Astrocyte of the cerebellum (primary cell): ENCODE measurements at regions of chr1 and their contacts with region 1.

Region 1: GRCh38 chr1:206634365-206635079 is 814 bp upstream of the DYRK3 start:
- DNase-seq: peak; percentile 75
- H3K4me3 ChIP-seq: peak overlapping the region; percentile 85
- CTCF ChIP-seq: peak; percentile 81

Region 2: GRCh38 chr1:206600527-206600926 is 34.0 kb before region 1 on chr1:
- in situ Hi-C with region 1: no loop called
- DNase-seq: peak; percentile 48
- H3K4me3 ChIP-seq: no peak overlapping the region
- CTCF ChIP-seq: no peak

Region 3: DNA sequence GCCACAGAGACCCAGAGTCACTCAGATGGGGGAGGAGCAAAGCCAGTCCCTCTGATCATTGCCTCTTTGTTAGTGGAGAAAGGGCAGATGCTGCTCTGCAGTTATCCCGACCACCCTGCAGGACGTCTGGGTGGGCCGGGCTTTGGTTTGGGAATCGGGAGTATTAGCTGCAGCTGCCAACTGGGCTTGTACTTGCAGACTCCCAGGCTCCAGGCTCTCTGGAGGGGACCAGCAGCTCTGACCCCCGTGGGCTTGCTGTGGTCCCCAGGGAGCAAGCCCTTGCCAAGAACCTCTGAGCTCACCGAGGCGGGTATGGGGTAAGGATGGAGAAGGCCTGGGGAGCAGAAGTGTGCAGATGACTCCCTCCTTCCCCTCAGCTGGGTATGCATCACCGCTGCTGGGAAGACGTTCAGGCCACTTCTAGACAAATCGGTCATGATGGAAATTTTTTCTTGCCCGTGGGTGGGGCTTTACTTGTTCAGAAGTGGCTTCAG is 71.8 kb after region 1 on chr1:
- in situ Hi-C with region 1: loop called (anchors 5 kb)
- DNase-seq: peak; percentile 71
- H3K4me3 ChIP-seq: no peak overlapping the region
- CTCF ChIP-seq: no peak